GM10248 (cell line): ENCODE measurements at regions of chrX and their contacts with region 1.

Region 1: DNA sequence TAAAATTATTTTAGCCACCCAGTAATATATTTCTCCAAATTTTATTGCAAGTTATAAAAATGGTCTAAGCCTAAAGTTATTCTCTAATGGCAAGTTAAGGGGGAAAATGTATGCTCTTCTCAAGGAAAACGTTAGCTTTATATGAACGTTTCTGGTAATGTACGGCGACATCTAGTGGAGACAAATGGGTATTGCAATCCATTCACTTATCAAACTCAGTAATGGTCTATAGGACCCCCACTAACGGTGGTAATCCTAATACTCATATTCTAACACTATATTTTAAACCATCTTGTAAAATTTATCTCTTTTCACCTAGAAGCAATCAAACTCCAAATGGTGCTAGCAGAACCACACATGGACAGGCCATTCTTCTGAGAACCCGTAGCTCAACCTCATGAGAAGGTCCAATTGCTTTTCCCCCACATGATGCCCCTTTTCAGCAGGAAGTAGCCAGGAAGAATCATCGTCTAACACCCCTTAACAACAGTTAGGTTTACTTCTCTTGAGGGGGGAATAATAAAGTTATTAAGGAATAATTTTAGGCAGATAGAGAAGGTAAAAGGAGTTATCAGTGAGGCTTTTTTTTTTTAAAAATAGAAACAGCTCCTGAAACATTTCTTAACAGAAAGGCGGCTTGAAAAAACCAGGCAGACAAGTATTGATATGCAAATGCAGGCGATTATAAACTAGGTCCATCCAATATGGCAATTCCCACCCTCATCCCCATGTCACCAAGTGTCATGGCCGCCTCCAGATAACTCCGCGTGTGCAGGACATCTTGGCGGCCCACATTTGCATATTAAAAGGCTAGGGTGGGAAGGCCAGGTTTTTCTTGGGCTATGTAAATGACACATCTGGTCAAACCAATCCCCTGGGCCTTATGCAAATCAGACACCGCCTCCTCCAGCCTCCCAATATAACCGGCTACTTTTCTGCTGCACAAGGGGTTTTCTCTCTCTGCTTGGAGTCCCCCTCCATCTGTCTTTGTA is 35.0 kb downstream of the NUDT11 start:
- DNase-seq: peak; percentile 19
- CTCF ChIP-seq: peak; percentile 72

Region 2: GRCh38 chrX:51336584-51336983 is 124.8 kb before region 1 on chrX:
- CTCF ChIA-PET with region 1: interaction called, 39 read pairs
- POLR2A ChIA-PET with region 1: no interaction called
- DNase-seq: peak; percentile 30
- CTCF ChIP-seq: peak; percentile 18

Region 3: DNA sequence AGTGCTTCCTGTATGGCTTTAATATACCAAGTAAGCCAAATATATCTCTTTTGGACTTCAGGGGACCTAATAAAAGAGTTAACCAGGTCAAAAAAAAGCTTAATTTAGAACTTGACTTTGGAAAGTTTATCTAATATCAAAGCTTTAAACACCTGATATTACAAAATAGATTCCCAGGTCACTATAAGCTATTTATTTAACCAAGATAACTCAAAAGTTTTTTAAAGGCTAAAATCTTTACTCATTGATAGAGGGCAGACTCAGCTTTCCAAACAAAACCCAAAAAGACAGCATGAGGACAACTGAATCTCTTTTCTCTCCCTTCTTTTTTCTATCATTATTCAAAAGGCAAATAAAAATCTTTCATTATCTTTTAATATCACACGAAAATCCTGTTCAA is 15.6 kb after region 1 on chrX:
- CTCF ChIA-PET with region 1: interaction called, 31 read pairs
- POLR2A ChIA-PET with region 1: no interaction called
- DNase-seq: no peak
- CTCF ChIP-seq: no peak